ENCODE measurements at regions of chr16 and their contacts with region 1.

Region 1: DNA sequence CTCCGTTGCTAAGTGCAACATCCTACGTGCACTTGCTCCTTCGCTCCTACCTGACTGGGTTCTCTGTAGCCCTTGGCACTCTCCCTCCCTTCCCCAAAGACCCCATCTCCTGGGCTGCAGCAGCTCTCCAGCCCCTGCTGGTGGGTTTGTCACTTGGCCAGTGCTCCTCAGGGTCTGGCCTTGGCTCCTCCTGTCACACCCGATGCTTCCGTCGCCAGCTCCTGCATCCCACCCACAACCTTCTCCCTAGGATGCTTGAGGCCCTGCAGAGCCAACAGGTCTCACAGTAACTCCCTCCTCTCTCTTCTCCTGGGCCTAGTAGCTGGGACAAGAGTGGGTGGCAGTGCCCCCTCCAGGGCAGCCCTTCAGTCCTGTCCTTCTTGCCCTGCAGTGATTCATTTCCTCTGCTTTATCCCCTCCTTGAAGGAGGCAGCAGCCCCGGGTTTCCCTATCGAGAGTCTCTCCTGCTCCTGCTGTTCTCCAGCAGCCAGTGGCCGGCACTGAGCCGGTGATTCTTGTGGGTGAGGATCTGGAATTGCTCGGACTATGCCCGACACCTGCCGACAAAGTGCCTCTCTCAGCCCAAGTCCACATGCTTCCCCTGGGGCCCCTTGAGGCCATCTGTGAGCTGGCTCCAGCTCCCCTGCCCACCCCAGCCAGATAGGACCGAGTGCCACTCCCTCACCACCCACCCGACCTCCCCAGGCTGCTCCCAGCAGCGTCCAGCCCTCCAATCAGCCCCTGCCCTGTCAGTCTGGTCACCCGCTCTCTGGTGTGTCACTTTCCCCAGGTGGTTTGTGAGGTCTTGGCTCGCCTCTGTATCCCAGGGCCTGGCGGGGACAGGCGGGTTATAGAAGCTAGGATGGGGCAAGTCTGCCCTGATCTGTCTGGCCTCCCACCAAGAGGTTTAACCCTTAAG is 3.8 kb downstream of the LITAFD start:
- DNase-seq: peak in 2 of 3 donors; percentile 34 to 56
- ATAC-seq: peak; percentile 43 to 56 (median 54)
- H3K4me3 ChIP-seq: no peak overlapping the region
- H3K27ac ChIP-seq: no peak overlapping the region
- H3K4me1 ChIP-seq: no peaks in the 10 kb centered on the region
- H3K27me3 ChIP-seq: no peaks in the 10 kb centered on the region
- CTCF ChIP-seq: no peak
- POLR2A ChIP-seq: no peak

Region 2: DNA sequence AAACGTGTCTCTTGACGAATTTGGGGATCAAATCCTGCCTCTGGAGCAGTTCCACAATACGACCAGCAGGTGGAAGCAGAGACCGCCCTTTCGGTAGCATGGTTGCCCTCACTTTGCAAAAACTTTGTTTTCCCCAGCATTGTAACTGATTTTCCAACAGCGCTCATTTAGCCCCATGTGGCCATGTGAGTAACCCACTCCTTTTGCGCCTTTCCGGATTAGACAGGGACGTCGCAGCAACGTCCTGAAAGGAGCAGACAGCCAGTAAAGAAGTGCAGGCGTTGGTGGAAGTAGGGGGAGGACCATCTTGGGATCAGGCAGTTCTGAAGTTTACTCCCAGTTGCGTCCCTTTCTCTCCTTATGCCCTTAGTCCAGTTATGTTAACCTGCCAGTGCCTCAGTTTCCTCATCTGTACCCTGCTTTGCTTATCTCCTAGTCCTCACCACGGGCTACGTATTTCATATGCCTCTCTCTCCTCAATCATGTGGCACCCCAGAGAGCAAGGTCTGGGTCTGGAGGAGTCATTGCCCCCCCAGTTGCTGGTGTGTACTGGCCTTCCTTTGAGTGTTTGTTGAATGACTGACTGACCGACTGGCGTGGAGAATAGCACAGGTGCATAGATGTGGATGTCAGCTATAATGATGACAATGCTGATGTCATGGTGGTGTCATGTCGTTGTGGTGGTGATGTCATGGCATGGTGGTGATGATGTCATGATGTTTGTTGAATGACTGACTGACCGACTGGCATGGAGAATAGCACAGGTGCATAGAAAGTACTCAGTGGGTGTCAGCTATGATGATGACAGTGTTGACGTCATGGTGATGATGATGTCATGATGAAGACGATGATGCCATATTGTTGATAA is 317.9 kb before region 1 on chr16:
- intact Hi-C with region 1: loop called (anchors 10 kb)
- DNase-seq: peak; percentile 55 to 75 (median 68)
- ATAC-seq: peak; percentile 94 to 98 (median 97)
- H3K4me3 ChIP-seq: no peak overlapping the region
- H3K27ac ChIP-seq: no peak overlapping the region
- H3K4me1 ChIP-seq: no peaks in the 10 kb centered on the region
- H3K27me3 ChIP-seq: no peaks in the 10 kb centered on the region
- CTCF ChIP-seq: peak; percentile 94 to 99 (median 98)
- POLR2A ChIP-seq: no peak

Region 3: GRCh38 chr16:8655184-8655717 is 230.7 kb before region 1 on chr16:
- intact Hi-C with region 1: loop called (anchors 5 to 10 kb)
- DNase-seq: no peak
- ATAC-seq: peak in 3 of 4 donors; percentile 76 to 92 (median 87)
- H3K4me3 ChIP-seq: no peak overlapping the region
- H3K27ac ChIP-seq: no peak overlapping the region
- H3K4me1 ChIP-seq: no peaks in the 10 kb centered on the region
- H3K27me3 ChIP-seq: no peaks in the 10 kb centered on the region
- CTCF ChIP-seq: peak in 3 of 4 donors; percentile 59 to 69 (median 65)
- POLR2A ChIP-seq: no peak

Region 4: DNA sequence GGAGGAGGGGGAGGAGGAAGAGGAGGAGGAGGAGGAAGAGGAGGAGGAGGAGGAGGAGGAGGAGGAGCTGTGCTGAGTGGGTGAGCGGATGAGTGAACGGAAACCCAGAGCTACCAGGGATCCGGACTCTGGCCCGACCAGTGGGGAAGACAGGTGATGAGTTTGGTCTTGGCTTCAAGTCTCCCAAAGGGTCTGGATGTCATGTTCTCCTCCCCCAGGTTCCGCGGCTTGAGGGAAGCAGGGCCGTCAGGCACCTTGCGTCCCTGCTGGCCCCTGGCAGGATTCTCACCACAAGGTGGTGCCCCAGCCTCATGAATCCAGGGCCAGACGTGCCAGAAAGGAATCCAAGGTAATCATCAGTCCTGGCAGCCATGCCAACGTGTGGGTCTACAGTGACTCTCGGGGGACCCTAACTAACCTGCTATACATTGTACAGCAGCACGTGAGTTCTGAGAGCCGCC is 225.1 kb before region 1 on chr16:
- intact Hi-C with region 1: loop called (anchors 5 to 10 kb)
- DNase-seq: peak; percentile 67 to 75 (median 70)
- ATAC-seq: peak; percentile 94 to 99 (median 98)
- H3K4me3 ChIP-seq: no peak overlapping the region
- H3K27ac ChIP-seq: no peak overlapping the region
- H3K4me1 ChIP-seq: no peaks in the 10 kb centered on the region
- H3K27me3 ChIP-seq: no peaks in the 10 kb centered on the region
- CTCF ChIP-seq: peak; percentile 52 to 88 (median 75)
- POLR2A ChIP-seq: no peak

Region 5: DNA sequence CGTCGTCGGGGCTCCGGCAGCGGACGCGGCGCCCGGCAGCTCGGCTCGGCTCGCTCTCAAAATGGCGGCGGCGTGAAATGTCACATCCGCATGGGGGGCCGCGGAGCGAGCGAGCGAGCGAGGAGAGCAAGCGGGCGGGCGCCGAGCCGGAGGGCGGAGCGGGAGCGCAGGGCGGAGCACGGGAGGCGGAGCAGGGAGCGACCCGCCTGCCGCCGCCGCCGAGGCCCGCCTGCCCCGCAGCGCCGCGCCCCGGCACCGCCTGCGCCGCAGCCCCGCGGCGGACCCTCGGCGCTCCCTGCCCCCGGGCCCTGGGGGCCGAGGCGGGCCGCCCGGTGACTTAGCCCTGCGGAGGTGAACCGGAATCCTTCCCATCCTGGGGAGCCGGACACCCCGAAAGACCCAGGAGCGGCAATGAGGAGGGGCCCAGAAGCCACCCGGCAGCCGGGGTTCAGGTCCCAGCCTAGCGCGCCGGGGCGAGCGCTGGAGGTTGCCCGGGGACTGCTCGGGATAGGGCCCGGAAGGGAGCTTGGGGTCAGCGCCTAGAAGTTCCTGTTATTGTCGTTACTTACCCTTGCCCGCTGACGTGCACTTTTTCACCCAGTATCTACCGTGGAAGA is 78.0 kb after region 1 on chr16 and contains the start of gene USP7:
- intact Hi-C with region 1: no loop called
- DNase-seq: peak; percentile 94 to 96 (median 95)
- ATAC-seq: peak; percentile 93 to 96 (median 93)
- H3K4me3 ChIP-seq: peak within 1 kb of the TSS; percentile 68 to 82 (median 75)
- H3K27ac ChIP-seq: peak within 1 kb of the TSS; percentile 56 to 76 (median 75)
- H3K4me1 ChIP-seq: peaks cover 0 to 33% (median 17%) of the 10 kb centered on the region in 4 donors
- H3K27me3 ChIP-seq: no peaks in the 10 kb centered on the region
- CTCF ChIP-seq: peak in 1 of 4 donors; percentile 21
- POLR2A ChIP-seq: peak; percentile 72
- total RNA-seq, gene USP7: 46.8 to 55.8 (median 49.1) TPM

Region 6: GRCh38 chr16:9107025-9107970 is 221.4 kb after region 1 on chr16:
- intact Hi-C with region 1: no loop called
- DNase-seq: no peak
- ATAC-seq: peak in 1 of 4 donors; percentile 26
- H3K4me3 ChIP-seq: no peak overlapping the region
- H3K27ac ChIP-seq: no peak overlapping the region
- H3K4me1 ChIP-seq: peaks cover 0 to 71% (median 18%) of the 10 kb centered on the region in 4 donors
- H3K27me3 ChIP-seq: no peaks in the 10 kb centered on the region
- CTCF ChIP-seq: no peak
- POLR2A ChIP-seq: no peak

Measured in right lobe of liver (tissue), 6 donors.